Pancreas (tissue), 10 donors: ENCODE measurements at regions of chr10 and their contacts with region 1.

Region 1: DNA sequence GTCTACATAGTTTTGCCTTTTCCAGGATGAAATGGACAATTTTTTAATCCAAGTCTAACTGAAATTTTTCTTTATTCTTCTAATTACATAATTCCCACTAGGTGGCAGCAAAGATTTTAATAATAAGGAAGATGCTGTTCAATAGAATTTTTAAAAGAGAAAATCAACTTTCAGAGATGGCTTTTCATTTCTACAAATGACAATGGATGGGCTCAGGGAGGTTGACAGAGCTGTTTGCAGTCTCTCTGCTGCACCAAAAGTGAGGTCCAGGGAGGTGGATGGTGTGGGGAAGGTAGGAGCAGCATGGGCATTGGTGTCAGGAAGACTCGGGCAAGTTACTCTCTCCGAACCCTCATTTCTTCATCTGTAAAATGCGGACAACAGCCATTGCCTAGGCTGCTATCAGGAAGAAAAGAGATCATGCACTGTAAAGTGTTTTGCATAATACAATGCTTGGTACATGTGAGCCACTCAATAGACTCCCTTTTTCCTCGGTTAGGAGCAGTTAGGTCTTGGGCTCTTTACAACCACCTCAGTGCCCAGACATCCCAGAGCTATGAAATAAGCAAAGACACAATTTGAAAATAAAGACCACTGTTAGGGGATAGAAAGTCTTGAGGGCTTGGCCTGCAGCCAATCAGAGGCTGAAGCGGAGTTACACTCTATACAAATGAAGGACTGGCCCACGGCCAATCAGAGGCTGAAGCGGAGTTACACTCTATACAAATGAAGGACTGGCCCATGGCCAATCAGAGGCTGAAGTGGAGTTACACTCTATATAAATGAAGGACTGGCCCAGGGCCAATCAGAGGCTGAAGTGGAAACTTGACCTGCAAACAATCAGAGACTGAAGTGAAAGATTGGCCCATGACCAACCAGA is 107.1 kb downstream of the ABLIM1 start:
- DNase-seq: peak; percentile 50 to 84 (median 70)
- ATAC-seq: peak; percentile 65 to 74 (median 68)
- H3K4me3 ChIP-seq: peak overlapping the region in 1 of 4 donors; percentile 11
- H3K27ac ChIP-seq: peak overlapping the region in 2 of 4 donors; percentile 24 to 64
- H3K4me1 ChIP-seq: peaks cover 0 to 10% (median 10%) of the 10 kb centered on the region in 3 donors
- H3K27me3 ChIP-seq: no peaks in the 10 kb centered on the region
- CTCF ChIP-seq: peak; percentile 14 to 41 (median 27)

Region 2: GRCh38 chr10:114304017-114304570 is 246.9 kb before region 1 on chr10:
- intact Hi-C with region 1: loop called in 1 of 3 experiments (anchors 10 kb)
- DNase-seq: peak in 5 of 6 donors; percentile 59 to 84 (median 74)
- ATAC-seq: peak; percentile 87 to 95 (median 91)
- H3K4me3 ChIP-seq: peak overlapping the region in 2 of 4 donors; percentile 30 to 38
- H3K27ac ChIP-seq: no peak overlapping the region
- H3K4me1 ChIP-seq: no peaks in the 10 kb centered on the region
- H3K27me3 ChIP-seq: no peaks in the 10 kb centered on the region
- CTCF ChIP-seq: peak; percentile 66 to 74 (median 70)

Region 3: GRCh38 chr10:114477285-114477684 is 73.7 kb before region 1 on chr10:
- intact Hi-C with region 1: loop called in 1 of 3 experiments (anchors 5 kb)
- DNase-seq: no peak
- ATAC-seq: peak in 1 of 4 donors; percentile 32
- H3K4me3 ChIP-seq: no peak overlapping the region
- H3K27ac ChIP-seq: no peak overlapping the region
- H3K4me1 ChIP-seq: peaks cover 7 to 17% (median 17%) of the 10 kb centered on the region in 3 donors
- H3K27me3 ChIP-seq: no peaks in the 10 kb centered on the region
- CTCF ChIP-seq: no peak

Region 4: GRCh38 chr10:114694752-114695151 is 143.8 kb after region 1 on chr10:
- intact Hi-C with region 1: loop called in 1 of 3 experiments (anchors 10 kb)
- DNase-seq: peak in 2 of 6 donors; percentile 41 to 68
- ATAC-seq: peak; percentile 63 to 82 (median 72)
- H3K4me3 ChIP-seq: no peak overlapping the region
- H3K27ac ChIP-seq: no peak overlapping the region
- H3K4me1 ChIP-seq: no peaks in the 10 kb centered on the region
- H3K27me3 ChIP-seq: no peaks in the 10 kb centered on the region
- CTCF ChIP-seq: peak in 3 of 4 donors; percentile 14 to 41 (median 26)

Region 5: DNA sequence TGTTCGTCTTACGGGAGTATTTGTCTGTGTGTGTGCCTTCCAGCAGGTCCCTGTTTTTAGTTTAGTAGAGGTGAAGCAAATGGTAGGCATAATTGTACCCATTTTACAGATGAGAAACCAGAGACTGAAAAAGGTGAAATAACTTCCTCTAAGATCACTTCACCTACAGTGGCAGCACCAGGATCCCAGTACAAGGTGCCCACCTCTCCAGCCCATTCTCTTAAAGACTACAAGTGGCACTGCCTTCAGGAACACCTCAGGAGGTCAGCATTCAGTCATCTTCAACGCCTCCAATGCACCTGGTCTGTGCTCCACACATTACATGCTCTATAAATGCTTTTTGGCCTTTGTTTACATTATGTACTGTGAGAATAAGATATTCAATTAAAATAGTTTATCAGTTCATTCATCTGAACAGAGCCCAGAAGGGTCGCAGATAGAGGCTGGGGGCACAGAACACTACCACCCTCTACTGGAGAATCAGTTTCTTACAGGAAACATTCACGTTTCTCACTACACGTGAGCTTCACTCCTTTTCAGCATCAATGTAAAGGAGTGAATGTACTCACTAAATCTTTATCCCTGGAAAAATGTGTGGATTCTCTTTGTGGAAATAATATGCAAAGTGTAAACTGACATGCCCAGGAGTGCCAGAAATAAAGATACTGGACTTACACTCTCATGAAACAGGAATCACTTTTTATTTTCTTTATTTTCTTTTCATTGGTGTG is 152.5 kb after region 1 on chr10:
- intact Hi-C with region 1: loop called in 2 of 3 experiments (anchors 10 kb)
- DNase-seq: no peak
- ATAC-seq: peak in 3 of 4 donors; percentile 73 to 84 (median 77)
- H3K4me3 ChIP-seq: no peak overlapping the region
- H3K27ac ChIP-seq: no peak overlapping the region
- H3K4me1 ChIP-seq: no peaks in the 10 kb centered on the region
- H3K27me3 ChIP-seq: no peaks in the 10 kb centered on the region
- CTCF ChIP-seq: peak in 3 of 4 donors; percentile 47 to 50 (median 49)

Region 6: GRCh38 chr10:114779803-114780609 is 229.0 kb after region 1 on chr10:
- intact Hi-C with region 1: loop called in 2 of 3 experiments (anchors 10 kb)
- DNase-seq: no peak
- ATAC-seq: peak in 3 of 4 donors; percentile 53 to 88 (median 65)
- H3K4me3 ChIP-seq: no peak overlapping the region
- H3K27ac ChIP-seq: peak overlapping the region in 1 of 4 donors; percentile 47
- H3K4me1 ChIP-seq: no peaks in the 10 kb centered on the region
- H3K27me3 ChIP-seq: no peaks in the 10 kb centered on the region
- CTCF ChIP-seq: no peak